Left colon (tissue), 2 donors: ENCODE measurements at regions of chr9 and their contacts with region 1.

Region 1: DNA sequence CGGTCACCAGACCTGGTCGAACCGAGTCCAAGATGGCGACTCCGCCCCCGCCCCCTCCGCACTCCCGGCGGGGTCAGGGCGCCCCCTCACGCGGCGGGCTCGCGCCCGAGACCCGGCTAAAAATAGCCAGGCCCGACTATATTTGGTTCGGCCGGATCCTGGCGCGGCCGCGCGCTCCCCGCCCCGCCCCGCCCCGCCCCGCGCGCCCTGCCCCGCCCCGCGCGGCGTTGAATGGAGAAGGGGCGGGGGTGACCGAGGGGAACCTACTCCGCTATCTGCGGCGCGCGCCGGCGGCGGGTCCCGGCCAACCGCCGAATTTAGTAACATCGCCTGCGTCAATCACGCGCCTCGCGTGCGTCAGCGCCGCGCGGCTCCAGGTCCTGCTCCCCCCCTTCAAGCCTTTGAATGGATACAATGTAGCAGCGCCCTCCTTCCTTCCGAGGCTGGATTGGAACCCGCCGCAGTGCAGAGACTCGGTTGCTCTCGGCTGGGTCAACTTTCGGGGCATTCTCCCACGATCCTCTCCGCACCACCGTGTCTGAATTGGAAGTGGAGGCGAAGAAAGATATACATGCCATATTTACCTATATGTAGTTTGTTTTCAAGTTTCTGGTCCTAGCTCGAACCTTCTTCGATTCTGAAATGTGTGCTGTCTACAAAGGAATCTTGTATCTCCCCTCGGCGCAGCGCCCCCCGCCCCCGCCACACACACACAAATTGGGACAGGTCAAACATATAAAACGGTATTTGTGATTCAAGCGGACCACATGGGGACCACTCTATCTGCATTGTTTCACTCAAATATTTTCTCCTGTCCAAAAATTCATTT is 1.6 kb upstream of the NR4A3 start:
- DNase-seq: peak; percentile 90
- ATAC-seq: peak; percentile 67

Region 2: DNA sequence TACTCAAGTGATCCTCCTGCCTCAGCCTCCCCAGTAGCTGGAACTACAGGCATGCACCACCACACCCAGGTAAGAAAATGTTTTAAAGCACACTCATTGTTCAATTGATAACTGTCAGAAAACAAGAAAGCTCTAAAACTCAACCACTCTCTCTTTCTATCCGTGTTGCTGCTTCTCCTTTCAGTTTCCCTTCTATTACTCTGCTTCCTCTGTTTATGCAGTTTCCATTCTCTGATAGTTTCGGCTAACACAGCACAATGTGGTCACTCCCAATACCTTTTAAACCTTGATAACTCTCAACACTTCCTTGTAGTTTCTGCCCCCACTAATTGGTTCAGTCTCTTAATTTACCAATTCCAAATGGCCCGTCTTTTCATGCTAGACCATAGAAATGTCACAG is 57.6 kb before region 1 on chr9:
- intact Hi-C with region 1: no loop called
- DNase-seq: no peak
- ATAC-seq: no peak

Region 3: DNA sequence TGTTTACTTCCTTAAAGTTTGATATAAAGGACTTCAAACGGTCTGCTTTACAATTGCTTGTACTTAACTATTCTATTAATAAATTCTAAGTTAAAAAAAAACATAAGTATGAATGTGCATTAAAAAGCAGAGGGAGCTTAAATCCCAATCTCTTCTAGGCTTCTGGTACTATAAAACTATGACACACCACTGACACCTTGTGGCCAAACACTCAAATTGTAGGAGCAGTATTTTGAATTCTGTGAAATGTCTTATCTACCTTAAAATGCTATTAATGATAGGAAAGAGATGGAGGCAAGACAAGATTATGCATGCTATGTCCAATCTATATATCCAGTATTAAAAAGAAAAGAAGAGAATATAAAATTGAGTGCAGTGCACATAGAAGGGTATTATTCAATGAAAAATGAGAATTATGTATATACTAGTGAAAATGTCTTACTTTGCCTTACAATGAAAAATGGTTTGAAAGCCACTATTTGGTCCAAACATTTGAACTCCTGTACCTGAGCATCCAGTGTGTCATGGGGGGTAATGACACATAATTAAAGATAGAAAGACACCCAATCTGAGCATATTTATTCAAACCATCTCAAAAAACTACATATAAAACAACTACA is 191.1 kb after region 1 on chr9:
- intact Hi-C with region 1: loop called in 1 of 2 experiments (anchors 10 kb)
- DNase-seq: no peak
- ATAC-seq: peak; percentile 57